SK-N-SH (cell line): ENCODE measurements at regions of chr5 and their contacts with region 1.

Region 1: DNA sequence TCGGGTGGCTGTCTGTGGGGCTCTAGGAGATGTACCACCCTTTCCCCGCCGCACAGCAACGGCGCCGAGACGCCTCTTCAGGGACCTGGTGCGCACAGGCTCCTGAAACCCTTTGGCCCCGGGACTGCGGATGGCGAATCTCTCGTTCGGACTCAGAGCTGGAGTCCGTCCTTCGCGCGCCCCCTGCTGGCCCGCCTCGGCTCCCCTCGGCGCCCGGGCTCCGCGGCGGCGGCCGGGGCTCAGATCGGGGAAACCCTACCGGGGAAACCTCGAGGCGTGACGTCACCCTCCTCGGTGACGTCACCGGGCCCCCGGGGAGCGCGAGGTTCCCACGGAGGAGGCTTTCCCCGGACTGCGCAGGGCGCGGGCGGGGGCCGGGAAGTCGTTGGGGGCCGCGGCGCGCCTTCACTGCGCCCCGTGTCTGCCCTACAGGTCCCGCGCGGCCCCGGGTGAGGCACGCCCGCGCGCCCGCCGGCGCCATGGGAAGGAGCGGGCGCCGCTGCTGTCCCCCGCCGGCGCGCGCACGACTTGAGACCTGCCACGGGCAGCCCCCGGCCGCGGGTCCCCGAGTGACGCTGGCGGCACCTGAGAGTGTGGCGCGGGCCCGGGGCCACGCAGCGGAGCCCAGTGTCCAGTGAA is 7.9 kb downstream of the PRR7 start:
- DNase-seq: peak; percentile 95
- H3K4me3 ChIP-seq: peak overlapping the region; percentile 47 to 48
- H3K27ac ChIP-seq: peak overlapping the region; percentile 61 to 91
- H3K4me1 ChIP-seq: peaks cover 13 to 85% of the 10 kb centered on the region in 2 experiments
- H3K27me3 ChIP-seq: no peaks in the 10 kb centered on the region
- CTCF ChIP-seq: peak; percentile 77
- EP300 ChIP-seq: no peak
- RAD21 ChIP-seq: peak; percentile 86

Region 2: GRCh38 chr5:177317959-177318377 is 136.5 kb before region 1 on chr5:
- CTCF ChIA-PET with region 1: interaction called, 14 read pairs
- POLR2A ChIA-PET with region 1: interaction called, 3 read pairs
- DNase-seq: peak; percentile 73
- H3K4me3 ChIP-seq: peak overlapping the region in 1 of 2 experiments; percentile 24; a peak in 1 of 4 replicates
- H3K27ac ChIP-seq: no peak overlapping the region
- H3K4me1 ChIP-seq: peaks cover 0 to under 1% of the 10 kb centered on the region in 2 experiments; a peak in 1 of 4 replicates
- H3K27me3 ChIP-seq: no peaks in the 10 kb centered on the region
- CTCF ChIP-seq: peak; percentile 88
- EP300 ChIP-seq: no peak
- RAD21 ChIP-seq: peak; percentile 78

Region 3: GRCh38 chr5:177382423-177383029 is 72.0 kb before region 1 on chr5:
- CTCF ChIA-PET with region 1: interaction called, 318 read pairs
- POLR2A ChIA-PET with region 1: no interaction called
- DNase-seq: peak; percentile 56
- H3K4me3 ChIP-seq: no peak overlapping the region
- H3K27ac ChIP-seq: no peak overlapping the region
- H3K4me1 ChIP-seq: peaks cover 0 to 7% of the 10 kb centered on the region in 2 experiments; a peak in 2 of 4 replicates
- H3K27me3 ChIP-seq: no peaks in the 10 kb centered on the region
- CTCF ChIP-seq: peak; percentile 27
- EP300 ChIP-seq: no peak
- RAD21 ChIP-seq: peak; percentile 38

Region 4: GRCh38 chr5:177412603-177413233 is 41.8 kb before region 1 on chr5:
- CTCF ChIA-PET with region 1: interaction called, 375 read pairs
- POLR2A ChIA-PET with region 1: no interaction called
- DNase-seq: no peak
- H3K4me3 ChIP-seq: no peak overlapping the region
- H3K27ac ChIP-seq: no peak overlapping the region
- H3K4me1 ChIP-seq: no peaks in the 10 kb centered on the region
- H3K27me3 ChIP-seq: no peaks in the 10 kb centered on the region
- CTCF ChIP-seq: no peak
- EP300 ChIP-seq: no peak
- RAD21 ChIP-seq: no peak

Region 5: GRCh38 chr5:177440211-177440971 is 14.1 kb before region 1 on chr5:
- CTCF ChIA-PET with region 1: interaction called, 84 read pairs
- POLR2A ChIA-PET with region 1: interaction called, 7 read pairs
- DNase-seq: no peak
- H3K4me3 ChIP-seq: no peak overlapping the region
- H3K27ac ChIP-seq: peak overlapping the region in 1 of 2 experiments; percentile 31; a peak in 1 of 4 replicates
- H3K4me1 ChIP-seq: peaks cover 0 to 8% of the 10 kb centered on the region in 2 experiments; a peak in 1 of 4 replicates
- H3K27me3 ChIP-seq: no peaks in the 10 kb centered on the region
- CTCF ChIP-seq: no peak
- EP300 ChIP-seq: no peak
- RAD21 ChIP-seq: no peak

Region 6: GRCh38 chr5:177483994-177484901 is 29.7 kb after region 1 on chr5:
- CTCF ChIA-PET with region 1: interaction called, 215 read pairs
- POLR2A ChIA-PET with region 1: interaction called, 3 read pairs
- DNase-seq: no peak
- H3K4me3 ChIP-seq: no peak overlapping the region
- H3K27ac ChIP-seq: peak overlapping the region; percentile 17 to 30; a peak in 2 of 4 replicates
- H3K4me1 ChIP-seq: peaks cover 6 to 51% of the 10 kb centered on the region in 2 experiments; a peak in 2 of 4 replicates
- H3K27me3 ChIP-seq: no peaks in the 10 kb centered on the region
- CTCF ChIP-seq: no peak
- EP300 ChIP-seq: no peak
- RAD21 ChIP-seq: no peak